Tibial artery (tissue), 4 donors: ENCODE measurements at regions of chr7 and their contacts with region 1.

Region 1: GRCh38 chr7:47088329-47089067 is 493.4 kb downstream of the TNS3 start:
- DNase-seq: peak; percentile 58 to 76
- H3K4me3 ChIP-seq: no peak overlapping the region
- H3K27ac ChIP-seq: no peak overlapping the region
- H3K4me1 ChIP-seq: peaks cover 0 to 10% (median 5%) of the 10 kb centered on the region in 4 donors
- H3K27me3 ChIP-seq: no peaks in the 10 kb centered on the region
- CTCF ChIP-seq: peak; percentile 84 to 87

Region 2: GRCh38 chr7:45917658-45918057 is 1170.8 kb before region 1 on chr7:
- intact Hi-C with region 1: loop called (anchors 2 kb)
- DNase-seq: peak; percentile 68 to 86
- H3K4me3 ChIP-seq: peak overlapping the region; percentile 64 to 67
- H3K27ac ChIP-seq: no peak overlapping the region
- H3K4me1 ChIP-seq: peaks cover 0 to 49% (median 40%) of the 10 kb centered on the region in 4 donors
- H3K27me3 ChIP-seq: no peaks in the 10 kb centered on the region
- CTCF ChIP-seq: peak; percentile 87 to 95

Region 3: GRCh38 chr7:45923290-45923689 is 1165.2 kb before region 1 on chr7:
- intact Hi-C with region 1: loop called (anchors 2 kb)
- DNase-seq: peak; percentile 74 to 88
- H3K4me3 ChIP-seq: peak overlapping the region; percentile 64 to 67
- H3K27ac ChIP-seq: peak overlapping the region; percentile 73 to 74
- H3K4me1 ChIP-seq: peaks cover 0 to 61% (median 46%) of the 10 kb centered on the region in 4 donors
- H3K27me3 ChIP-seq: no peaks in the 10 kb centered on the region
- CTCF ChIP-seq: peak; percentile 82 to 92

Region 4: GRCh38 chr7:46352004-46352954 is 736.2 kb before region 1 on chr7:
- intact Hi-C with region 1: loop called (anchors 5 kb)
- DNase-seq: no peak
- H3K4me3 ChIP-seq: no peak overlapping the region
- H3K27ac ChIP-seq: no peak overlapping the region
- H3K4me1 ChIP-seq: no peaks in the 10 kb centered on the region
- H3K27me3 ChIP-seq: no peaks in the 10 kb centered on the region
- CTCF ChIP-seq: peak; percentile 39 to 67

Region 5: DNA sequence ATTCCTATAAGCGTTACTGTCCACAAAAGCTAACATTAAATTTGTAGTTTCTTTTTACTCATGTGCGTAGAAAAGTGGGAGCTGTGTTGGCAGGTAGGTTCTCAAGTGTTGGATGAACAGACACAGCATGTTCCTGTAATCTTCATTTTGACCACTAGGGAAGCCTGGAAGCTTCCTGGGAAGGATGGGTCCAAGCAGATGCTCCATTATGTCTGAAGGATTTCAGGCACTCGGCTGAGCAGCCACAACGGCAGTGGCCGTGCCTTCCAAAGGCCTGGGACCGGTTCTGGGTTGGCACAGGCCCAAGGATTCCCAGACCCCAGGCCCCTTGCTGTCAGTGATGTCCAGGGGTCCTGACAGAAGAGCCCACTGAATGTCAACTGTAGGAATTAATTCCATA is 107.1 kb after region 1 on chr7:
- intact Hi-C with region 1: loop called (anchors 10 kb)
- DNase-seq: no peak
- H3K4me3 ChIP-seq: no peak overlapping the region
- H3K27ac ChIP-seq: no peak overlapping the region
- H3K4me1 ChIP-seq: no peaks in the 10 kb centered on the region
- H3K27me3 ChIP-seq: peaks cover 0 to 3% of the 10 kb centered on the region in 2 donors
- CTCF ChIP-seq: peak in 1 of 2 experiments; percentile 8

Region 6: GRCh38 chr7:47254081-47255006 is 165.8 kb after region 1 on chr7:
- intact Hi-C with region 1: loop called (anchors 10 kb)
- DNase-seq: peak; percentile 80 to 92
- H3K4me3 ChIP-seq: peak overlapping the region; percentile 55 to 59
- H3K27ac ChIP-seq: peak overlapping the region; percentile 76
- H3K4me1 ChIP-seq: peaks cover 0 to 26% (median 13%) of the 10 kb centered on the region in 4 donors
- H3K27me3 ChIP-seq: no peaks in the 10 kb centered on the region
- CTCF ChIP-seq: peak; percentile 90 to 97

Region 7: DNA sequence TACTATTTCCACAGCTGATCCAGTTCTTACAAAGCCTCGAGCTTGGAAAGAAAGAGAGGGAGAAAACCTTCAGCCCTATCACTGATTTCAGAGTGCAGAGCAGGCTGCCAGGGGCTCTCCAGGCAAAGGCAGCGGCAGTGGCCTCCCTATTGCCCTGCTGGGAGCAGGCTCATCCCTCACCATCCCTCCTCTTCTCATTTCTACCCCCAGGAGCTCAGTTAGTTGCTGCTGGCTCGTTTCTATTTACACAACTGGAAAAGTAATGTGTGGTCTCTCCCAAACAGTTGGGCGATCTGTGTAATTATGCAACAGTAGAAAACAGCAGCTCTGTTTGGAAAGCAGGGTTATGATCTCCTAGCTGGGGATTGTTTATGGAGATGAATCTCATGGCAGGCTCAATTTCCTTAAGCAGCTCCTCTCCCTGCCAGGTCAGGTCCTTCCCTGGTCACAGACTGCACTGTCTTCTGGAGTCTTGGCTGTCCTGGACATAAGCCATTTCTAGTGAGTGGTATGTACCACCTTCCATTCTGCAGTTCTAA is 522.1 kb after region 1 on chr7:
- intact Hi-C with region 1: no loop called
- DNase-seq: no peak
- H3K4me3 ChIP-seq: no peak overlapping the region
- H3K27ac ChIP-seq: peak overlapping the region; percentile 28 to 37
- H3K4me1 ChIP-seq: peaks cover 0 to 41% (median 19%) of the 10 kb centered on the region in 4 donors
- H3K27me3 ChIP-seq: no peaks in the 10 kb centered on the region
- CTCF ChIP-seq: no peak